H1 (cell line): ENCODE measurements at regions of chr7 and their contacts with region 1.

Region 1: GRCh38 chr7:149377386-149377785 is 83.5 kb downstream of the ZNF777 start:
- DNase-seq: no peak
- H3K4me3 ChIP-seq: no peak overlapping the region
- H3K27ac ChIP-seq: no peak overlapping the region
- H3K4me1 ChIP-seq: no peaks in the 10 kb centered on the region
- H3K27me3 ChIP-seq: no peaks in the 10 kb centered on the region
- CTCF ChIP-seq: no peak
- EP300 ChIP-seq: no peak
- POLR2A ChIP-seq: no peak
- RAD21 ChIP-seq: no peak

Region 2: GRCh38 chr7:149355390-149356048 is 21.9 kb before region 1 on chr7:
- CTCF ChIA-PET with region 1: interaction called, 15 read pairs
- POLR2A ChIA-PET with region 1: interaction called, 3 read pairs
- DNase-seq: peak; percentile 81 to 87
- H3K4me3 ChIP-seq: peak overlapping the region; percentile 17 to 58 (median 42); a peak in 7 of 8 replicates
- H3K27ac ChIP-seq: no peak overlapping the region; the same call in 1 of the 2 replicates
- H3K4me1 ChIP-seq: peaks cover 0 to 3% (median 0%) of the 10 kb centered on the region in 4 experiments; a peak in 3 of 7 replicates
- H3K27me3 ChIP-seq: no peaks in the 10 kb centered on the region
- CTCF ChIP-seq: peak; percentile 37 to 56 (median 50)
- EP300 ChIP-seq: no peak
- POLR2A ChIP-seq: no peak
- RAD21 ChIP-seq: peak; percentile 39 to 58; a peak in 3 of 4 replicates